ENCODE measurements at regions of chr19 and their contacts with region 1.

Region 1: DNA sequence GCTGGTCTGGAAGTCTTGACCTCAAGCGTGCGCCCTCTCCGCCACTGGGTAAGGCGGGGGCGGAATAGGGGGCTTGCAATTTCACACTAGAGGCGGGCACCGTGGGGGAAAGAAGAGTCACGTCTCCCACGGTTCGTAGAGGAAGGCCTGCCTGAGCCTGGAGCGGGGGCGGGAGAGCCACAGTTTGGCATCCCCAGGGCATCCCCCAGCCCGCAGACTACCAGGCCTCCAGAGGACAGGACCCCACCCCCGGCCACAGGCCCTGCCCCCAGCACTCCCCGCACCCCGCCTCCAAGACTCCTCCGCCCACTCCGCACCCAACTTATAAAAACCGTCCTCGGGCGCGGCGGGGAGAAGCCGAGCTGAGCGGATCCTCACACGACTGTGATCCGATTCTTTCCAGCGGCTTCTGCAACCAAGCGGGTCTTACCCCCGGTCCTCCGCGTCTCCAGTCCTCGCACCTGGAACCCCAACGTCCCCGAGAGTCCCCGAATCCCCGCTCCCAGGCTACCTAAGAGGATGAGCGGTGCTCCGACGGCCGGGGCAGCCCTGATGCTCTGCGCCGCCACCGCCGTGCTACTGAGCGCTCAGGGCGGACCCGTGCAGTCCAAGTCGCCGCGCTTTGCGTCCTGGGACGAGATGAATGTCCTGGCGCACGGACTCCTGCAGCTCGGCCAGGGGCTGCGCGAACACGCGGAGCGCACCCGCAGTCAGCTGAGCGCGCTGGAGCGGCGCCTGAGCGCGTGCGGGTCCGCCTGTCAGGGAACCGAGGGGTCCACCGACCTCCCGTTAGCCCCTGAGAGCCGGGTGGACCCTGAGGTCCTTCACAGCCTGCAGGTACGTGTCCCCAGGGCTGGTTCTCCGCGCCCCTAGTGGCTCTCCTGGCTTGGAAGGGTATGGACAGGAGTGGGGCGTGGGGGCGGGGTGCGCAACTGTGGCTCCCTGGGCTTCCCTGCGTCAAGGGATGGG is at the start of gene ANGPTL4:
- DNase-seq: peak; percentile 68
- ATAC-seq: peak; percentile 77
- H3K4me3 Mint-ChIP-seq: peak within 1 kb of the TSS; percentile 75
- H3K27ac Mint-ChIP-seq: no peak within 1 kb of the TSS
- H3K4me1 Mint-ChIP-seq: peaks cover 24% of the 10 kb centered on the region
- H3K27me3 Mint-ChIP-seq: peaks cover 69% of the 10 kb centered on the region
- CTCF ChIP-seq: no peak
- total RNA-seq, gene ANGPTL4: 1.0 to 2.7 TPM (median 2.2 TPM) in 3 replicates

Region 2: DNA sequence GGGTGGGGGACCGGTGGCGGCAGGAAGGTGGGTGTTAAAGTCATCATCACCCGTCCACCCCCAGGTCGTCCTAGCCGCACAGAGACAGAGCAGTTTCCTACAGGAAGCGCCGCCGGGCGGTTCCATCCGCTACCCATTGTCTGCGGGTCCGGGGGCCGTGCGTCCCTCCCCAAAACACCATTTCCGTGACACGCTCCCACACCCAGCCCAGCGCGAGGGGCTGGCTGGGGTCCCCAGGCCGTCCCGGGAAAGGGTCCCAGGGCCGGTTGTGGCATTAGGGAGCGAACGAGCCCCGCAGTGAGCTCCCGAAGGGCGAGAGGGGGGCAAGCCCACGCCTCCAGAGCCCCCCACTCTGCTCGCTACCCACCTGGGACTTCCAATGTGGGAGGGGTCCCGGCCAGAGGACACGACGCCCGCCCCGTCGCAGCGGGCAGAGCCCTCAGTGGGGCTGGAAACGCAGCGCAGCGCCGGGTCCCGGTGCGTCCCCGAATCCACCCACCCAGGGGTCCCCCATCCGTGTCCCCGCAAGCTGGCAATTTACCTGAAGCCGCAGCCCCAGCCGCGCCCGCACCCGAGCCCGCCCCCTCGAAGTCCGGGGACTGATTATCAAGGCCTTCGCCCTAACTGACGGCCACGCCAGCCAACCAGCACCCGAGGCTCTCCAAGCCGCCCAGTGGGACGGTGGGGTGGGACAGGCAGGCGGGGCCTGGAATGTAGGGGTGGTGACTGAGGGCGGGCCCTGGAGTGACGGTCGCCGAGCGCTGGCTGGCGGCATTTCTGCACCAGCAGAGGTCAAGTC is 21.2 kb before region 1 on chr19 and contains the start of gene KANK3:
- CTCF ChIA-PET with region 1: interaction called, 10 read pairs
- POLR2A ChIA-PET with region 1: interaction called, 5 read pairs
- DNase-seq: peak; percentile 99
- ATAC-seq: peak; percentile 98
- H3K4me3 Mint-ChIP-seq: peak within 1 kb of the TSS; percentile 64
- H3K27ac Mint-ChIP-seq: no peak within 1 kb of the TSS; the same call in 1 of the 2 replicates
- H3K4me1 Mint-ChIP-seq: peaks cover 22% of the 10 kb centered on the region
- H3K27me3 Mint-ChIP-seq: peaks cover 38% of the 10 kb centered on the region
- CTCF ChIP-seq: no peak
- total RNA-seq, gene KANK3: 7.8 to 8.0 TPM (median 8.0 TPM) in 3 replicates

Region 3: DNA sequence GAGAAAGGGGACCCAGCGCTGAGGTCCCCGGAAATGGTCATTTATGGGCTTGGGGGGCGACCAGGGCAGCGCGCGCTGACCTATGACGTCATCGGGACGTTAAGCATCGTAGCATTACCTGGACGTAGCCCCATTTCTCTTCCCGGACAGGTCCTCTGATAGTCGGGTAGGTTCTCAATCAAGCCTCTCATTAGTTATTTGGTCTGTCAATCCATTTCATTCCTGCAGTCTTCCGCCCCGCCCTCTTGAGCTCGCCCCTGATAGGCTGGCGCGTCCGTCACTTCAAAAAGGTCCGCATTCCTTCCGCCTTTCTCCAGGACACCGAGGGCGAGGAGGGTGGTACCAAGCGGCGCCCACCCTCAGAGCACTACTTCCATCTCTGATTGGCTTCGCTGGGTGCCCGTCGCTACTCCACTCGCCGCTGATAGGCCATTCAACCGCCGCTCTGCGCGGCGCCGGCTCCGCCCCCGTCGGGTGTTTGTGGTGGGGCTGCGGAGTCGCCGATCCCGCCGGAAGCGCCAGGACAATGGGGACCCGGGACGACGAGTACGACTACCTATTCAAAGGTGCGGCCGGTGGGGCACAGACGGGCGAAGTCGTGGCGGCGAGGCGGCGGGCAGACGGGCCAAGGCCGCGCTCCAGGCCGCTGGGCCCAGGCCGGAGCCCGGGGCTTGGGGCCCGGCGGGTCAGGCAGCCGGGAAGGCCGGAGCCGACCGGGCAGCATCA is 26.0 kb after region 1 on chr19 and contains the start of gene RAB11B:
- CTCF ChIA-PET with region 1: interaction called, 7 read pairs
- POLR2A ChIA-PET with region 1: interaction called, 12 read pairs
- DNase-seq: peak; percentile 99
- ATAC-seq: peak; percentile 95
- H3K4me3 Mint-ChIP-seq: peak within 1 kb of the TSS; percentile 89
- H3K27ac Mint-ChIP-seq: peak within 1 kb of the TSS; percentile 97
- H3K4me1 Mint-ChIP-seq: peaks cover 16% of the 10 kb centered on the region
- H3K27me3 Mint-ChIP-seq: no peaks in the 10 kb centered on the region
- CTCF ChIP-seq: no peak
- total RNA-seq, gene RAB11B: 108 to 127 TPM (median 120 TPM) in 3 replicates

Measured in WTC11 (cell line).